OCI-LY7 (cell line): ENCODE measurements at regions of chr5 and their contacts with region 1.

Region 1: DNA sequence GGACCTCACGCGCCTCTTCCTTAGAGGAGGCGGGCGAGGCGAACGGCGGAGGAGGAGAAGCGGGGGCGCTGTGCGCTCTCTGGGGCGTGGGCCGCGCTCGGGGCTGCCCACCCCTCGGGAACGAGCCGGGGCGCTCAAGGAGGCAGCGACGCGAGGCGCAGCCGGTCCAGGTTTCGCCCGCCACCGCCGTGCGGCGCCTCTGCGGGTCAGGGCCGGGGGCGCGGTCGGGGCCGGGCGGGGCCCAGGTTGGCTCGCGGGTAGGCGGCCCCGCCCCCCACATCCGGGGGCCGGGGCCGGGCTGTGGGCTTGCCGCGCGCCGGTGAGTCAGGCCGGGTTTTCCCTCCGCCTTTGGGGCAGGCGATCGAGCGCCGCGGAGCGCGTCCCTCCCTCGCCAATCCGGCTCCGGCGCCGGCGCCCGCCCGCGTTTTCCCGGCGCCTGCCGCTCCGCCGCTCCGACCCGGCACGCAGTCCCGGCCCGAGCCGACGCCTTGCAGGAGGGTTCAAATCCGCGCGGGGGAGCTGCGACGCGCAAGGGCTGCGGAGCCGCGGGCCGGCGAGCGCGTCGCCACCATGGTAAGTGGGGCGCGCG is at the start of gene N4BP3:
- DNase-seq: peak; percentile 93
- H3K4me3 ChIP-seq: peak within 1 kb of the TSS; percentile 95
- H3K27ac ChIP-seq: peak within 1 kb of the TSS; percentile 90
- H3K4me1 ChIP-seq: peaks cover 49% of the 10 kb centered on the region
- CTCF ChIP-seq: peak; percentile 57
- total RNA-seq, gene N4BP3: 23.7 and 28.3 TPM in 2 replicates

Region 2: DNA sequence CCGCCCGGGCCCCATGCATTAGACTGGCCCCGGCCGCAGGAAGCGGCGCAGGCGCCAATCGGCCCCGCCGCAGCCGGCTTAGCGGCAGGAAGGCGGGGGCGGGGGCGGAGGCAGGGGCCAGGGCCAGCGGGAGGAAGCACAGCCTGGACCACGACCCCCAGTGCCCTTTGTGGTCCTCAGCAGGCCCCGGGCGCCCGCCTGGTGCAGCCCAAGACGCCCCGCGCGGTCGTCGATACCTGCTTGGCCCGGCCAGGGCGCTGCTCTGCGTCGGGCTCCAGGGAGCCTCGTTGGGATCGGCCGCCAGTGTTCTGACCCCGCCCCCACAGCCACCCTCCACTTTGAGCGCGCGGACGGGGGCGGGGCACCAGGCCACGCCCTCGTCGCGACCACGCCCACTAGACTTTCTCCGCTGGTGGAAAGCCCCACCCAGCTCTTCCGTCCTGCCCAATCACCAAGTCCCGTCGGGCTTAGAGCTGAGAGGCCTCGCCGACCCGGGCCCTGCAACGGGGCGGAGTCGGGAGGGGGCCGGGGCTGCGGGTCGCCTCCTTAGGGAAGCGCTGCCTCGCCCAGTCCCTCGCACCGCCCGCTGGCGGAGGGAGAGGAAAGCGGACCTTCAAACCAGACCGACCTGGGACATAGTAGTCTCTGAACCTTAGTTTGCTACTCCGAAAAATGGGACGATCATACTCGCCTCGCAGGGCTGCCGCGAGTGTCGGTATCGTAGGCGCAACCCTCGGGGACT is 615.8 kb before region 1 on chr5 and contains the start of gene PDLIM7:
- CTCF ChIA-PET with region 1: no interaction called
- POLR2A ChIA-PET with region 1: no interaction called
- intact Hi-C with region 1: loop called (anchors 10 kb)
- DNase-seq: peak; percentile 96
- H3K4me3 ChIP-seq: peak within 1 kb of the TSS; percentile 81
- H3K27ac ChIP-seq: peak within 1 kb of the TSS; percentile 29
- H3K4me1 ChIP-seq: peaks cover 60% of the 10 kb centered on the region
- CTCF ChIP-seq: no peak
- total RNA-seq, gene PDLIM7: 38.8 and 41.4 TPM in 2 replicates

Region 3: DNA sequence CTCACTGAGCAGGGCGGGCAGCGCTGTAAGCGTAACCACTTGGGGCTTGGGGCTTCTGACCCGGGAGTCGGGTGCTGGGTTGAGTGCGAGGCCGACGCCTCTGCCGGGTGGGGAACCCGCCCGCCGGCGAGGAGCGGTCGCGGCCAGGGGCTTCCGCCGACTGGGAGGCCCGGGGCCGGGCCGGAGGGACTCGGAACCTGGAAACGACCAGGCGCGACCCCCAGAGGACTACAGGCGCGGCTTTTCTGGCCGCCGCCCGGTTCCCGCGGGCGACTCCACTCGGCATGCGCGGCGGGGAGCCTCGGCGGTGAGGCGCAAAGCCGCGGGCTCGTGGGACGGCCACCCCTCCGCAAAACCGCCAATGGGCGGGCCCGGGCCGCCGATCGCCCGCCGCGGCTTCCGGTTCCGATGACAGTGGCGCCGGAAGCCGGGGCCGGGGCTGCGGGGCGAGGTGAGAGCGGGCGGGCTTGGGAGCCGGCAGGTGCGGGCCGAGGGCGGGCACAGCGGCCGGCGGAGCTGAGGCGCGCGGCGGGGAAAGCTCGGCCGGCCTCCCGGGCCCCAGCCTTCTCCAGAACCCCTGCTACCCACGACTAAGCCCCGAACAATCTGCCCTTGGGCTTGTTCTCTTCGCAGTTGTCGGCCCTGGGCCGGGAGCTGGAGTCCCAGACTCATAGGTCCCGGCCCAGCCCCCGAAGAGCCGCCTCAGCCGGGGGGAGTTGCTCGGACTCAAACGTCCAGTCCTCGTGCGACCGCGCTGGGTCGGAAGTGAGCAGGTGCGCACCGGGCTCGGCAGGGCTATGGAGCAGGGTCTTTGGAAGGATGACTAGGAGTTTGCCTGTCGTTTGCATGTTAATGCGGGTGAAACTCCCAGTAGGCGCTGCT is 17.6 kb after region 1 on chr5 and contains the start of gene RMND5B:
- CTCF ChIA-PET with region 1: no interaction called
- POLR2A ChIA-PET with region 1: interaction called, 4 read pairs
- intact Hi-C with region 1: loop called (anchors 2 kb)
- DNase-seq: peak; percentile 92
- H3K4me3 ChIP-seq: peak within 1 kb of the TSS; percentile 97
- H3K27ac ChIP-seq: peak within 1 kb of the TSS; percentile 82
- H3K4me1 ChIP-seq: peaks cover 19% of the 10 kb centered on the region
- CTCF ChIP-seq: no peak
- total RNA-seq, gene RMND5B: 54.2 and 68.3 TPM in 2 replicates

Region 4: DNA sequence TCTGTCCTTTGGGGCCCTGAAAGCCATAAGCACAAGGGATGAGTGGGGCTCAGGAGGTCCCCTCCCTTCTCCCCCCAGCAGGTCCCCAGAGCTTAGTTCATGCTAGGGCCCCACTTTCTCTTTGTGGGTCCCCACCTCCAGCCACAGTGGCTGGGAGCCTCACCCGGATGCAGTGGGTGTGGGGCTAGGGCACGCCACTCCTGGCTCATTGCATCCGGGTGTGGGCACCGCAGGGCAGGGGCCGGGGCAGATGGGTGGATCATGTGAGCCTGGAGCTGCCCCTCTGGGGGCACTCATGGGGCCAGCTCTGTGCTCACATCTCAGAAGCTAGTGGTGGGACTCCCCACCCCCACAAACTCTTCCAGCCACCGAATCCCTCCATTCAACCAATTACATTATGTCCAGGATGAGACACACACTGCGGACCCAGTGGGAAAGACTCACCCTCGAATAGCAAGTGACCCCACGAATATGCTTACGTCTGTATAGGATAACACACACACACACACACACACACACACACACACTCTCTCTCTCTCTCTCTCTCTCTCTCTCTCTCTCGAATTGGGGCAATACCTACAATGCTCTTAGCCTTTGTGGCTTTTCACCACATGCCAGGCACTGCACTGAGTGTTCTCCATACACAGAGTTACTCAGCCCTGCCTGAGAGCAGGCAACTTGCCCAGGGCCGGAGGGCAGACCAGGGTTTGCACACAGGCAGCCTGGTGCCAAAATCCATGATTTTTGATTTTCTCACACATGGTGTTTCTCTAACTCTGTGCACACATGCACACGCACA is 136.1 kb after region 1 on chr5:
- CTCF ChIA-PET with region 1: no interaction called
- POLR2A ChIA-PET with region 1: no interaction called
- intact Hi-C with region 1: no loop called
- DNase-seq: no peak
- H3K4me3 ChIP-seq: no peak overlapping the region
- H3K27ac ChIP-seq: no peak overlapping the region
- H3K4me1 ChIP-seq: peaks cover 24% of the 10 kb centered on the region
- CTCF ChIP-seq: no peak